CD4-positive, alpha-beta memory T cell (primary cell): ENCODE measurements at regions of chr1 and their contacts with region 1.

Region 1: GRCh38 chr1:61077676-61078541 is 4.5 kb upstream of the NFIA start:
- DNase-seq: peak; percentile 93 to 97 (median 96)
- H3K4me3 ChIP-seq: peak overlapping the region; percentile 47 to 73
- H3K4me3 Mint-ChIP-seq: peak overlapping the region; percentile 91 to 98 (median 94)
- H3K27ac ChIP-seq: peak overlapping the region; percentile 68
- H3K27ac Mint-ChIP-seq: peak overlapping the region; percentile 91 to 99 (median 98)
- H3K4me1 ChIP-seq: peaks cover 45% of the 10 kb centered on the region
- H3K4me1 Mint-ChIP-seq: peaks cover 30 to 62% (median 40%) of the 10 kb centered on the region in 4 donors
- H3K27me3 ChIP-seq: no peaks in the 10 kb centered on the region
- H3K27me3 Mint-ChIP-seq: peaks cover 0 to 2% of the 10 kb centered on the region in 2 donors

Region 2: DNA sequence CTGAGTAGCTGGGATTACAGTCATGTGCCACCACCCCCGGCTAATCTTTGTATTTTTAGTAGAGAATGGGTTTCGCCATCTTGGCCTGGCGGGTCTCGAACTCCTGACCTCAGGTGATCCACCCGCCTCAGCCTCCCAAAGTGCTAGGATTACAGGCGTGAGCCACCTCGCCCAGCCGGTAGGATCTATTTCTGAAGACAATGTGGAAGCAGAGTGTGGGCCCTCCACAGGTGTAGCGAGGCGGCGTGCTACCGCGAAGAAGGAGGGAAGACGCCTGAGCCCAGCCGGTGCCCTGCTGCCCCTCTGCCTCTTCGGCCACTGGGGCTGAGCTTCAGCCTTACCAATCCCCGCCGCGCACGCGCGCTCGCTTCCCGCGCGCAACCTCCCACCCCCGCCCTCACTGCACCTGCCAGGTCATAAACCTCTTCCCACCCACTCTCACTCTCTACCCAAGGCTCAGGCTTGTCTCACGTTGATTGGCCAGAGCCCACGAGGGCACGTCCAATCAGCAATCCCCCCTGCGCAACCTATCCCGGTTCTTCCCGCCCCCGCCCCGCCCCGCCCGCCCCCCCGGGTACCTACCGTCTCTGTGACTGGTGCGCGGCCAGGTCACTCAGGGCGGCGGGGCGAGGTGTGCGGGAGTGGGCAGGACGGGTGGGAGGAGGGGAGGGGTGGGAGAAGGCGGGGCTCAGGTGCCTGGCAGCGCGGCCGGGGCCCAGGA is 1263.6 kb before region 1 on chr1:
- CTCF ChIA-PET with region 1: no interaction called
- POLR2A ChIA-PET with region 1: no interaction called
- intact Hi-C with region 1: loop called (anchors 5 kb)
- DNase-seq: peak; percentile 86 to 94 (median 92)
- H3K4me3 ChIP-seq: peak overlapping the region in 1 of 2 donors; percentile 52
- H3K4me3 Mint-ChIP-seq: peak overlapping the region in 5 of 8 donors; percentile 82 to 93 (median 88)
- H3K27ac ChIP-seq: peak overlapping the region; percentile 70
- H3K27ac Mint-ChIP-seq: peak overlapping the region in 6 of 7 donors; percentile 79 to 96 (median 91)
- H3K4me1 ChIP-seq: peaks cover 20% of the 10 kb centered on the region
- H3K4me1 Mint-ChIP-seq: peaks cover 3 to 6% (median 5%) of the 10 kb centered on the region in 4 donors
- H3K27me3 ChIP-seq: no peaks in the 10 kb centered on the region
- H3K27me3 Mint-ChIP-seq: peaks cover 10 to 14% of the 10 kb centered on the region in 2 donors

Region 3: GRCh38 chr1:61056573-61057439 is 21.1 kb before region 1 on chr1:
- CTCF ChIA-PET with region 1: interaction called, 84 read pairs
- POLR2A ChIA-PET with region 1: interaction called, 24 read pairs
- intact Hi-C with region 1: loop called (anchors 1 kb)
- DNase-seq: peak in 4 of 5 donors; percentile 44 to 48 (median 47)
- H3K4me3 ChIP-seq: peak overlapping the region; percentile 64 to 90
- H3K4me3 Mint-ChIP-seq: peak overlapping the region; percentile 83 to 93 (median 89)
- H3K27ac ChIP-seq: no peak overlapping the region
- H3K27ac Mint-ChIP-seq: peak overlapping the region in 6 of 7 donors; percentile 5 to 90 (median 65)
- H3K4me1 ChIP-seq: peaks cover 33% of the 10 kb centered on the region
- H3K4me1 Mint-ChIP-seq: peaks cover 13 to 33% (median 21%) of the 10 kb centered on the region in 4 donors
- H3K27me3 ChIP-seq: peaks cover 2% of the 10 kb centered on the region
- H3K27me3 Mint-ChIP-seq: peaks cover 30 to 40% of the 10 kb centered on the region in 2 donors

Region 4: DNA sequence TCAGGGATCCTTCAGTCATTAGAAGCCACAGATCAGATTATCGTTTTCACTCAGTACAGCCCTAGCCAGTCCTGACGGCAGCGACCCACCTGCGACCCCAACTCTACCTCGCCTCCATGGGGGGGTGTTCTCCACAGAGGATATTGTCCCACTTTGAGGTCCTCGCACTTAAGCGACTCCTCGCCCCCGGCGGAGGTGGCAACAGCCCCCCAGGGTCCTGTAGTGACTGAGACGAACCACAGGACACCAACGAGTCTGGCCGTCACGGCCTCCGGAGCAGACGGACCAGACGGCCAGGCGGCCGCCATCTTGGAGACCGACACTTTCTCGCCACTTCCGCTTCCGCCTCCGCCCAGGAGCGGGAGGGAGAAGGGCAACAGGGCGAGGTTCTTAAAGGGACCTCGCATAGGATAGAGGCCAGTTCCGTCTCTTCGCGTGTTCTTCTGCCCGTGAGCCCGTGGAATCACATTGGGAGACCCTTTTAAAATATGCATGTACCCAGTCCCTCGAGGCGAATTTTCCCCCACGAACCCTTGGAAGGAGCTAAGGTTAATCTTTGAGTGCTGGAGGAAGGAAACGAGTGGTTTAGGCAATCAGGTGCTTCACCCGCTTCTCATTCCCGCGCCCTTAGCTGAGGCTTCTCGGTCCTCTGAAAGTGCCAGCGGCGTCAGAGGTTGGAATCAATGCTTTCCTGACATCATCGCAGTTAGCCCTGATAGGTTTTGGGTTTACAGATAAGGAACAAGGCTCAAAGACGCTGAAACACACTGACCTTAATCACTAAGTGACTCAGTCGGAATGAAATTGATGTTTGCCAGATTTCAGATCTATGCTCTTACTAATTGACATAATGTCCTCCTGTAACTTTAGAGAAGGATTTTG is 647.1 kb after region 1 on chr1 and contains the start of gene TM2D1:
- CTCF ChIA-PET with region 1: no interaction called
- POLR2A ChIA-PET with region 1: no interaction called
- intact Hi-C with region 1: loop called (anchors 5 kb)
- DNase-seq: peak; percentile 82 to 88 (median 83)
- H3K4me3 ChIP-seq: peak within 1 kb of the TSS; percentile 85 to 100
- H3K4me3 Mint-ChIP-seq: peak within 1 kb of the TSS; percentile 92 to 99 (median 96)
- H3K27ac ChIP-seq: peak within 1 kb of the TSS; percentile 88
- H3K27ac Mint-ChIP-seq: peak within 1 kb of the TSS; percentile 94 to 98 (median 98)
- H3K4me1 ChIP-seq: peaks cover 29% of the 10 kb centered on the region
- H3K4me1 Mint-ChIP-seq: peaks cover 14 to 39% (median 25%) of the 10 kb centered on the region in 4 donors
- H3K27me3 ChIP-seq: no peaks in the 10 kb centered on the region
- H3K27me3 Mint-ChIP-seq: no peaks in the 10 kb centered on the region
- total RNA-seq, gene TM2D1: 50.7 to 55.1 TPM

Region 5: DNA sequence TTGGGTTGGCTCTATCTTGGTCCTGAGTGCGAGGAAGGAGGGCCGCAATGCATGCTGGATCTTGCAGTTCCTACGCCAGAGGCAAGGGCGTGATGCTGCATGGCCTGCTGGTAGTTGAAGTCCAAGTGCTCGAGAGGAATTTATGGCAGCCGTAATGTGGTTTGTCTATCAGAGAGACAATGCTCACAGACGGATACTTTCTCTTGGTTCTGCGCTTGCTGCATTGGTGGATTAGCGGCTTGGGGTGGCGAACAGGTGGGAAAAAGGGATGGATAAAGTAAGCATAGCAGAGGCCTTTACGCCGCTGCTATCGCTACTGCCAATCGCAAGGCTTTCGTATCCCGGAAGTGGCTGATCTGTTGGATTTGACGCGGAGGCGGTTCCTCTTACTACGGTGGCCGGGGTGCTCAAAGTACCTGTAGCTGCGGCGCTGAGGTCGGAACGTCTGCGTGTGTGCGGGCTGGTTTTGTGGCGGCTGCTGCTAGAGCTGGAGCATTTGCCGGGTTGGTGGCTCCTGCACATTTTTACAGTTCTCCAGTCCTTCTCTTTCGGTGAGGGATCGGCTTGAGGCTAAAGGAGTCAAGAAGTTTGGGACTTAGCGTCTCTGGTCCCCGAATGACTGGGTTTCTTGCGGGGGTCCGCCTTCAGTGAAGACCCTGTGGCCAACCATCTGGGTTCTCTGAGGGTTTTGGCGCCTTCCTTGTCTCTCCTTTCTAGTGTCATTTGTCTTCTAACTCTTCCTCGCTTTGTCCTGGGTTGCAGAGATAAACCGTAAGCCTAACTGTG is 1706.0 kb after region 1 on chr1 and contains the start of gene ATG4C:
- CTCF ChIA-PET with region 1: no interaction called
- POLR2A ChIA-PET with region 1: no interaction called
- intact Hi-C with region 1: loop called (anchors 5 kb)
- DNase-seq: peak; percentile 95 to 97 (median 96)
- H3K4me3 ChIP-seq: peak within 1 kb of the TSS; percentile 94 to 100
- H3K4me3 Mint-ChIP-seq: no peak within 1 kb of the TSS
- H3K27ac ChIP-seq: peak within 1 kb of the TSS; percentile 85
- H3K27ac Mint-ChIP-seq: no peak within 1 kb of the TSS
- H3K4me1 ChIP-seq: peaks cover 14% of the 10 kb centered on the region
- H3K4me1 Mint-ChIP-seq: peaks cover 5 to 10% (median 7%) of the 10 kb centered on the region in 4 donors
- H3K27me3 ChIP-seq: no peaks in the 10 kb centered on the region
- H3K27me3 Mint-ChIP-seq: peaks cover 3 to 4% of the 10 kb centered on the region in 2 donors
- total RNA-seq, gene ATG4C: 11.7 to 15.2 TPM